CD4-positive, alpha-beta T cell (primary cell): ENCODE measurements at regions of chr7 and their contacts with region 1.

Region 1: GRCh38 chr7:66075590-66076461 is at the start of gene ASL:
- DNase-seq: peak; percentile 61 to 93 (median 78)
- ATAC-seq: peak; percentile 97
- H3K4me3 ChIP-seq: peak within 1 kb of the TSS; percentile 96
- H3K4me3 Mint-ChIP-seq: peak within 1 kb of the TSS; percentile 94
- H3K27ac ChIP-seq: peak within 1 kb of the TSS in 1 of 2 donors; percentile 13
- H3K27ac Mint-ChIP-seq: peak within 1 kb of the TSS; percentile 69
- H3K4me1 ChIP-seq: peaks cover 19% of the 10 kb centered on the region
- H3K4me1 Mint-ChIP-seq: peaks cover 22% of the 10 kb centered on the region
- H3K27me3 ChIP-seq: no peaks in the 10 kb centered on the region
- H3K27me3 Mint-ChIP-seq: no peaks in the 10 kb centered on the region
- CTCF ChIP-seq: no peak
- total RNA-seq, gene ASL: 11.2 to 12.3 TPM

Region 2: GRCh38 chr7:65750511-65751344 is 325.1 kb before region 1 on chr7:
- CTCF ChIA-PET with region 1: no interaction called
- POLR2A ChIA-PET with region 1: no interaction called
- intact Hi-C with region 1: loop called in 1 of 2 experiments (anchors 10 kb)
- DNase-seq: peak; percentile 70 to 92 (median 84)
- ATAC-seq: peak; percentile 96
- H3K4me3 ChIP-seq: peak overlapping the region; percentile 98
- H3K4me3 Mint-ChIP-seq: peak overlapping the region; percentile 99
- H3K27ac ChIP-seq: peak overlapping the region; percentile 56 to 69
- H3K27ac Mint-ChIP-seq: peak overlapping the region; percentile 96
- H3K4me1 ChIP-seq: peaks cover 25% of the 10 kb centered on the region
- H3K4me1 Mint-ChIP-seq: peaks cover 33% of the 10 kb centered on the region
- H3K27me3 ChIP-seq: no peaks in the 10 kb centered on the region
- H3K27me3 Mint-ChIP-seq: no peaks in the 10 kb centered on the region
- CTCF ChIP-seq: no peak

Region 3: DNA sequence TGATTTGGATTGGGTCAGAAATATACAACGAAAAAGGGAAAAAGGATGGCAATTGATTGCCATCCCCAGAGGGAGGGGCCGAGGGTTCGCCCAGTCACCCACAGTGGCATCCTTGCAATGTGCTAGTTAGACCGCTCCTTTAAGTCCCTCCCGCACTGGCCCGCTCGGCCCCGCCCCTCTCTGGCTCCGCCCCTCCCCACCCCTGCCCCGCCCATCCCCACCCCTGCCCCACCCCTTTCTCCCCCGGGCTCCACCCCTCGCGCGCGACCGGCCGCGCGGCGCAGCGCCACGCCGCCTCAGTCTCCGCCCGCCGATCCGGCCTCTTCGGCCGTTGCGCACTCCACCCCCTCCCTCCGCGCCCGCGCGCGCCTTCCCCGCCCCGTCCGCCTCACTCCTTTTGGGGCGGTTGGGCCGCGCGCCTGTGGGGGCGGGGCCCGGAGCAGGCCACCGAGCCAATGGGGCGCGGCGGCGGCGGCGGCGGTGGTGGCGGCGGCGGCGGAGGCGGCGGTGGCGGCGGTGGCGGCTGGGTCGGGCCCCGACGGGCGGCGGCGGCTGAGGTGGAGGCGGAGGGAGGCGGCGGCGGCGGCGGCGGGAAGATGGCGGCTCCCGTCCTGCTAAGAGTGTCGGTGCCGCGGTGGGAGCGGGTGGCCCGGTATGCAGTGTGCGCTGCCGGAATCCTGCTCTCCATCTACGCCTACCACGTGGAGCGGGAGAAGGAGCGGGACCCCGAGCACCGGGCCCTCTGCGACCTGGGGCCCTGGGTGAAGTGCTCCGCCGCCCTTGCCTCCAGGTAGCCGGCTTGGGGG is 202.8 kb before region 1 on chr7 and contains the start of gene VKORC1L1:
- CTCF ChIA-PET with region 1: no interaction called
- POLR2A ChIA-PET with region 1: no interaction called
- intact Hi-C with region 1: loop called in 1 of 2 experiments (anchors 2 kb)
- DNase-seq: peak; percentile 89 to 97 (median 96)
- ATAC-seq: peak; percentile 87
- H3K4me3 ChIP-seq: peak within 1 kb of the TSS; percentile 68
- H3K4me3 Mint-ChIP-seq: peak within 1 kb of the TSS; percentile 91
- H3K27ac ChIP-seq: no peak within 1 kb of the TSS
- H3K27ac Mint-ChIP-seq: peak within 1 kb of the TSS; percentile 80
- H3K4me1 ChIP-seq: peaks cover 13% of the 10 kb centered on the region
- H3K4me1 Mint-ChIP-seq: peaks cover 12% of the 10 kb centered on the region
- H3K27me3 ChIP-seq: no peaks in the 10 kb centered on the region
- H3K27me3 Mint-ChIP-seq: no peaks in the 10 kb centered on the region
- CTCF ChIP-seq: no peak
- total RNA-seq, gene VKORC1L1: 1.9 to 3.0 TPM

Region 4: GRCh38 chr7:66050990-66051424 is 24.8 kb before region 1 on chr7:
- CTCF ChIA-PET with region 1: no interaction called
- POLR2A ChIA-PET with region 1: no interaction called
- intact Hi-C with region 1: loop called in 1 of 2 experiments (anchors 2 kb)
- DNase-seq: no peak
- ATAC-seq: no peak
- H3K4me3 ChIP-seq: no peak overlapping the region
- H3K4me3 Mint-ChIP-seq: no peak overlapping the region
- H3K27ac ChIP-seq: no peak overlapping the region
- H3K27ac Mint-ChIP-seq: no peak overlapping the region
- H3K4me1 ChIP-seq: no peaks in the 10 kb centered on the region
- H3K4me1 Mint-ChIP-seq: no peaks in the 10 kb centered on the region
- H3K27me3 ChIP-seq: no peaks in the 10 kb centered on the region
- H3K27me3 Mint-ChIP-seq: peaks cover 1% of the 10 kb centered on the region
- CTCF ChIP-seq: no peak

Region 5: GRCh38 chr7:66296001-66296521 is 220.2 kb after region 1 on chr7:
- CTCF ChIA-PET with region 1: no interaction called
- POLR2A ChIA-PET with region 1: no interaction called
- intact Hi-C with region 1: no loop called
- DNase-seq: no peak
- ATAC-seq: no peak
- H3K4me3 ChIP-seq: no peak overlapping the region
- H3K4me3 Mint-ChIP-seq: no peak overlapping the region
- H3K27ac ChIP-seq: no peak overlapping the region
- H3K27ac Mint-ChIP-seq: no peak overlapping the region
- H3K4me1 ChIP-seq: no peaks in the 10 kb centered on the region
- H3K4me1 Mint-ChIP-seq: no peaks in the 10 kb centered on the region
- H3K27me3 ChIP-seq: no peaks in the 10 kb centered on the region
- H3K27me3 Mint-ChIP-seq: no peaks in the 10 kb centered on the region
- CTCF ChIP-seq: no peak

Region 6: GRCh38 chr7:66654123-66654732 is 578.4 kb after region 1 on chr7:
- CTCF ChIA-PET with region 1: no interaction called
- POLR2A ChIA-PET with region 1: no interaction called
- intact Hi-C with region 1: no loop called
- DNase-seq: peak; percentile 94 to 99 (median 96)
- ATAC-seq: peak; percentile 90
- H3K4me3 ChIP-seq: peak overlapping the region; percentile 97
- H3K4me3 Mint-ChIP-seq: peak overlapping the region; percentile 99
- H3K27ac ChIP-seq: peak overlapping the region; percentile 91 to 92
- H3K27ac Mint-ChIP-seq: peak overlapping the region; percentile 97
- H3K4me1 ChIP-seq: peaks cover 26% of the 10 kb centered on the region
- H3K4me1 Mint-ChIP-seq: peaks cover 47% of the 10 kb centered on the region
- H3K27me3 ChIP-seq: no peaks in the 10 kb centered on the region
- H3K27me3 Mint-ChIP-seq: no peaks in the 10 kb centered on the region
- CTCF ChIP-seq: peak; percentile 35